ENCODE measurements at regions of chr2 and their contacts with region 1.

Region 1: DNA sequence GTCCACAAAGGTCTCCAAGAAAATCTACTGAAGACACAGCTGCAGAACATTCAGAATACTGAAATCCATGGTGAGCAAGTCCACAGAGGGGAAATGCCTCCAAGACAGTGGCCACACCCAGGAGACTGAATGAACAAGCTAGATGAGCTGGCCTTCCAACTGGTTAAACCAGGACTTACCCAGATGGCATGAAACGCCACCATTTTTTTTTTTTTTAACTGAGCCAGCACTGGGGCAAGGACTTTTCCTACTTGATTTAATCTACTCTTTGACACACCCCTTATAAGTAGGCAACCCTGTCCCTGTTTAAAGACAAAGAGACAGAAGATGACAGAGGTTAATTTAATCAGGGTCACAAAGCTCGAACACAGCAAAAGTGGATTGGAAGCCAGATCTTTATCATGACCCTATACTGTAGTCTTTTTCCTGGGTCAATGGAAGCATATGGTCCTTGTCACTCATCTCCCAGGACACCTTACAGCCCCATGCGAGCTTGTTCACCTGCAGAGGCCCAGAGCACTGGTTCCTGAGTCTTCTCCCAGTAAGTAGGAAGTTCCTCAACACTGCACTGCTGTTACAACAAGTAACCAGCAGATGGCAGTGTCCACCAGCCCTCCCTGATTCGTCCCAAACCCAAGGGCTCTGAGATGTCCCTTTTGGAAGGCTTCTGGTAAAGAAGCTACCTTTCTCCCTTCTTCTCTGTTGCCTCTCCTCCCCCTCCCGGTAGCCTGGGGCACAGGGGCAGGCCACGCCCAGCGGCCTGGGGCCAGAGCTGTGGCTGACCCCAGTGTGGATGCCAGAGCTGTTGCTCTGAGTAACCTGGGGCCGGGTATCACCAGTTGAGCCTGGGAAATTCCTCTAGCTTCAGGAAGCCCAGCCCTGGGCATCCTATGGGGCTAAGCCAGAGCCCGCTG is 5.6 kb upstream of the GDF7 start:
- DNase-seq: peak; percentile 61
- H3K4me3 ChIP-seq: no peak overlapping the region
- H3K27ac ChIP-seq: no peak overlapping the region
- H3K27me3 ChIP-seq: peaks cover 73% of the 10 kb centered on the region
- CTCF ChIP-seq: peak; percentile 98

Region 2: DNA sequence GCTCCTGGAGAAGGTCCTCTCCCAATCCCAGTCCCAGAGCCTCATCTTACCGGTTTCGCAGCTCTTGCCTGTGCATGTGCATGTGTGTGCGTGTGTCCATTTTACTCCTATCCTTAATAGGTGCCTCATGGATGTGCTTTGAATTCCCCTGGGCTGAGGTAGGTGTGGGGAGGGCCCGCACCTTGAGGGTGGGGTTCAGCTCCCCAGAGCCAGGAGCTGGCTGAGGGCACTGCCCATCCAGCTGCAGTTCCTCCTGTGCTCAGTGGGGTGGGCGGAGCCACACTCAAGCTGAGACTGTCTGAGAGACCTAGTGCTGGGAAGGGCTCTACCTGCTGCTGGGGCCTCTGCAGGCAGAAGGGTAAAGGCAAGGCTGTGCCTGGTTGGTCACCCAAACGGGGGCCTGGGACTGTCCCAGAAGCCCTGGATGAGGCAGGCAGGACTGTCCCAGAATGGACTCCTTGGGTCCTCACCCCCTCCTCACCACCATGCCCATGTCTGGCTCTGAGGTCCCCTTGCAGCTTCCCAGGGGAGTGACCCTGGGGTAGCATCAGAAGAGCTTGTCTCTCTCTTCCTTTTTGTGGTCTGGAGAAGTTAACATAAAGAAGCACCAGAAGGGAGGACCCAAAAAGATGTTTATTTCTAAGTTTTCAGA is 14.5 kb after region 1 on chr2:
- CTCF ChIA-PET with region 1: interaction called, 94 read pairs
- POLR2A ChIA-PET with region 1: no interaction called
- DNase-seq: no peak
- H3K4me3 ChIP-seq: no peak overlapping the region
- H3K27ac ChIP-seq: no peak overlapping the region
- H3K27me3 ChIP-seq: peaks cover 20% of the 10 kb centered on the region
- CTCF ChIP-seq: no peak

Region 3: DNA sequence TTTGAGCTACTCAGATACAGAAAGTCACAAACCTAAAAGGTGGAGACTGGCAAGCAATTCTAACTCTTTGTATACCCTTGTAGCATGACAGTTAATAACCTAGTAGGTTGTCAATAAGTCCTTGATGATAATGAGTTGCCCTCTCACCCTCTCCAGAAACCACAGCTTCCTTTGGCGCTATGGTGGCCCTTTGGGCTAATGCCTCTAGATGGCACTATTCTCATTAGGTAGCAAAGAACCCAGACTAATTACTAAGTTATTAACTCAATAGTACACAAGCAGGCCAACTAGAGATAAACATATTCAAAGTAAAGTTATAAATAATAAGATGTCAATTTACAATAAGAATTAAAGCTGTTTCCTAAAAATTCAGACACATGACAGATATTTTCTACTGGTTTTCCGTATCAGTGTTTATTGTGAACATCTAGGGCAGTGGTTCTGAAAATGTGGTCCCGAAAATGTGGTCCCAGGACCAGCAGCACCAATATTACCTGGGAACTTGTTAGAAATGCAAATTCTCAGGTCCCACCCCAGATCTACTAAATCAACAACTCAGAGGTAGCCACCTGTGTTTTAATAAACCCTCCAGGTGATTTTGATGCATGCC is 120.4 kb after region 1 on chr2:
- CTCF ChIA-PET with region 1: interaction called, 13 read pairs
- POLR2A ChIA-PET with region 1: no interaction called
- DNase-seq: no peak
- H3K4me3 ChIP-seq: no peak overlapping the region
- H3K27ac ChIP-seq: no peak overlapping the region
- H3K27me3 ChIP-seq: no peaks in the 10 kb centered on the region
- CTCF ChIP-seq: peak; percentile 61

Region 4: GRCh38 chr2:20838016-20838415 is 176.7 kb after region 1 on chr2:
- CTCF ChIA-PET with region 1: interaction called, 11 read pairs
- POLR2A ChIA-PET with region 1: no interaction called
- DNase-seq: no peak
- H3K4me3 ChIP-seq: no peak overlapping the region
- H3K27ac ChIP-seq: no peak overlapping the region
- H3K27me3 ChIP-seq: no peaks in the 10 kb centered on the region
- CTCF ChIP-seq: no peak

Region 5: GRCh38 chr2:20962939-20963557 is 301.7 kb after region 1 on chr2:
- CTCF ChIA-PET with region 1: interaction called, 302 read pairs
- POLR2A ChIA-PET with region 1: no interaction called
- DNase-seq: peak; percentile 3
- H3K4me3 ChIP-seq: no peak overlapping the region
- H3K27ac ChIP-seq: no peak overlapping the region
- H3K27me3 ChIP-seq: peaks cover 9% of the 10 kb centered on the region
- CTCF ChIP-seq: peak; percentile 89

Region 6: DNA sequence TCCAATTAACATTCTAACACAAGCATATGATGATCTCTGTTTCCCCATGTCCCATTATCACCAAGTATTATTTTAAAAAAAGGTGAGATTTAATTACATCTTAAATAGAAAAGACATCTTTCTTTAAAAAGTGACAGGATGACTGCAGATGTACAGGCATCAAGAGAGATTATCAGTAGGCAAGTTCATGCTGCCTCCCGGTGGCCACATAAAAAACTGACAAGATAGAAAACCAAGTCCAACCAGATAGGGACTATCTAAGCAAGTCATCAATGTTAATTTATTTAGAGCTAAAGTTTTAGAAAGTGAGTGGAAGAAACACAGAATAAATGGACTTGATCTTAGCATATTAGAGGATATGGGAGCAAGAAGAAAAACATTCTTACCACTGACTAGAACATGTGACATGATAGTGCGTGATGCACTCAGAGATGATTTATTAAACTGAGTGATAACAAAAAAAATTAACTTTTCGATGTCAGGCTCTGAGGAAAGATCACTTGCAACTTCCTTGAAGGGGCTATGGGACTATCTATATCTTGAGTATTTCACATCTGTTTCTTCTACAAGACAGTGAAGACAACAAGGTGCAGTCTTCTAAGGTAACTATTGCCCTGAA is 457.1 kb after region 1 on chr2:
- CTCF ChIA-PET with region 1: interaction called, 14 read pairs
- POLR2A ChIA-PET with region 1: no interaction called
- DNase-seq: no peak
- H3K4me3 ChIP-seq: no peak overlapping the region
- H3K27ac ChIP-seq: no peak overlapping the region
- H3K27me3 ChIP-seq: no peaks in the 10 kb centered on the region
- CTCF ChIP-seq: peak; percentile 45